Dorsolateral prefrontal cortex (tissue), 120 donors: ENCODE measurements at regions of chr4 and their contacts with region 1.

Region 1: DNA sequence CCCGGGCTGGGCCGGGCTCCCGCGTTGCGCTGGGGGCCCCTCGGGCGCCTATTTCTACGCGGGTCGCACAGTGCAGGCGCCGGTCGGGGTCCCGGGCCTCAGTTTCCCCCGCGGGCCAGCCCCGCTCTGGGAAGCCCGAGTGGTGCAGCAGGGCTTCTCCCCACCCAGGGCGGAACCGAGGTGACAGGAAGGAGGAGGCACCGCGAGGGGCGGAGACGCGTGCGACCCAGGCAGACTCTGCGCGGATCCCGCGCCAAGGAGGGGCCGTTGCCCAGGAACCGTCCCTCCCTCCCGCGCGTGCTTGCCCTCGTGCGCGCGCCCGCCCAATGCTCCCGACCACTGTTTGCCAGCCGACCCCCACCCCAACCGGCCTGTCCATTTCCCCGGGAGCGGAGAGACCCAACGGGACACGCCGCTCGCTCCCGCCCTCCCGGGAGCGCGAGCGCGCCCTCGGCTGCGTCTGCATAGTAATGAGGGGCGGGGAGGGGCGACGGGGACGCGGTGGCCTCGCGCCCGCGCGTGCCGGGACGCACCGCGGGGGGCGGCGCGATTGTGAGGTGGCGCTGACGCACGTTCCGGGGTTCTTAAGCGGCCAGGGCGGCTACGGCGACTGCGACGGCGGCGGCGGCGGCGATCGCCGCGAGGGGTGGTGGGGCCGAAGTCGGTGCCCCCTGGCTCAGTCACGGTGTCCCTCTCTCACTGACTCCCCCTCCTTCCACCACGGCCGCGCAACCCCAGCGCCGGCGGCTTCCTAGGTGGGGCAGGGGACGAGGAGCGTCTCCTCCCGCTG is at the start of gene CPEB2:
- DNase-seq: peak; percentile 90 to 96 (median 94)
- H3K4me3 ChIP-seq: peak within 1 kb of the TSS; percentile 70 to 100 (median 95)
- H3K27ac ChIP-seq: peak within 1 kb of the TSS; percentile 97 to 100 (median 100)
- H3K27me3 ChIP-seq: no peaks in the 10 kb centered on the region
- CTCF ChIP-seq: peak in 15 of 56 donors; percentile 1 to 24 (median 12)
- total RNA-seq, gene CPEB2: 31.4 to 88.1 (median 53.3) TPM

Region 2: DNA sequence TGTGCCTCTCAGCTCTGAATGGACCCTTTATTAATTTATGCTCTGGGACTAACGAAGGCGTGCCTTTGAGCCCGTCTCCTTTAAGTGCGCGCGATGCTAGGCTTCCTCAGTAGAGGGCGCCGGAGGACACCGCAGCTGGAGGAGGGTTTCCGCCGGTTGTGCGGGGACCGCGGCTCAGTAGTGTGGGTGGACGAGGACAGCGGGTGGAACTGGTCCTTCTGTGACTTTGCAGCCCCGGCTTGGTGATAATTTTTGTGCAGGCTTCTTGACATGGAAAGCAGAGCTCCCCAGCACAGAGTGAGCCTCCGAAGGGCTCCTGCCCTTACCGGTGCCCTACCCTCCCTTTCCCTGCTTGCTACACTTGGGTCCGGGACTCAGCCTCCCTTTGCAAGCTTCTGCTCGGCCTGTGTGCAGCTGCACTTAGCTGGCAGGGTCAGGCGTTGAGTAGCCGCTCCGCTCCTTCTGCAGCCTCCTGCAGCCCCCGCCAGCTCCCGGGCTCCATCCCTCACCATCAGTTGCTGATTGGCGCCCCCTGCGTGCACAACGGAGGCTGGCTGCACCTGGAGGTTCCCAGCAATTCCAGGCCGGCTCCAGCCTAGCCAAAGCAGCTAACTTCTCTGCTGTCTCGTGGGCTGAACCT is 1347.8 kb before region 1 on chr4:
- intact Hi-C with region 1: loop called (anchors 5 to 10 kb)
- DNase-seq: peak; percentile 74 to 90 (median 86)
- H3K4me3 ChIP-seq: peak overlapping the region; percentile 40 to 86 (median 68)
- H3K27ac ChIP-seq: peak overlapping the region in 55 of 59 donors; percentile 24 to 96 (median 87)
- H3K27me3 ChIP-seq: no peaks in the 10 kb centered on the region
- CTCF ChIP-seq: peak; percentile 41 to 91 (median 78)

Region 3: GRCh38 chr4:14545163-14545562 is 456.9 kb before region 1 on chr4:
- intact Hi-C with region 1: no loop called
- DNase-seq: no peak
- H3K4me3 ChIP-seq: no peak overlapping the region
- H3K27ac ChIP-seq: no peak overlapping the region
- H3K27me3 ChIP-seq: no peaks in the 10 kb centered on the region
- CTCF ChIP-seq: no peak

Region 4: DNA sequence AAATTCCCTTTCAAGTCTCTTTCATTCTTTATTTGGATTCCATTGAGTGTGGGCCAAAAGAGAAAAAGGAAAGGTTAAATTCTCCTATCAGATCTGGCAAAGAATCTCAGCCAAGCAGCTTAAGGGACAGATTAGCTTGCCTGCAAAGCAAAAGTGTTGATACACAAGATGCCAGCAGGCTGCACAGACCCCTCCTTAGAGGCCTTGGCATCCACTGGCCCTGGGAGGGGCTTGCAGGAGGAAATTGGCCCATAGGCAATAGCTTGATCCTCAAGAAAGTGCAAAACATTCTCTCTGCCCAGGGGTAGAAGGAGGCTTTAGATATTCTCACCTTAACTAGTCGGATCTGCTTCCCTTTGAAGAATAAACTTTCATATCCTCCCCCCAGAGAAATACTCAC is 300.2 kb before region 1 on chr4:
- intact Hi-C with region 1: no loop called
- DNase-seq: no peak
- H3K4me3 ChIP-seq: no peak overlapping the region
- H3K27ac ChIP-seq: no peak overlapping the region
- H3K27me3 ChIP-seq: no peaks in the 10 kb centered on the region
- CTCF ChIP-seq: no peak

Region 5: DNA sequence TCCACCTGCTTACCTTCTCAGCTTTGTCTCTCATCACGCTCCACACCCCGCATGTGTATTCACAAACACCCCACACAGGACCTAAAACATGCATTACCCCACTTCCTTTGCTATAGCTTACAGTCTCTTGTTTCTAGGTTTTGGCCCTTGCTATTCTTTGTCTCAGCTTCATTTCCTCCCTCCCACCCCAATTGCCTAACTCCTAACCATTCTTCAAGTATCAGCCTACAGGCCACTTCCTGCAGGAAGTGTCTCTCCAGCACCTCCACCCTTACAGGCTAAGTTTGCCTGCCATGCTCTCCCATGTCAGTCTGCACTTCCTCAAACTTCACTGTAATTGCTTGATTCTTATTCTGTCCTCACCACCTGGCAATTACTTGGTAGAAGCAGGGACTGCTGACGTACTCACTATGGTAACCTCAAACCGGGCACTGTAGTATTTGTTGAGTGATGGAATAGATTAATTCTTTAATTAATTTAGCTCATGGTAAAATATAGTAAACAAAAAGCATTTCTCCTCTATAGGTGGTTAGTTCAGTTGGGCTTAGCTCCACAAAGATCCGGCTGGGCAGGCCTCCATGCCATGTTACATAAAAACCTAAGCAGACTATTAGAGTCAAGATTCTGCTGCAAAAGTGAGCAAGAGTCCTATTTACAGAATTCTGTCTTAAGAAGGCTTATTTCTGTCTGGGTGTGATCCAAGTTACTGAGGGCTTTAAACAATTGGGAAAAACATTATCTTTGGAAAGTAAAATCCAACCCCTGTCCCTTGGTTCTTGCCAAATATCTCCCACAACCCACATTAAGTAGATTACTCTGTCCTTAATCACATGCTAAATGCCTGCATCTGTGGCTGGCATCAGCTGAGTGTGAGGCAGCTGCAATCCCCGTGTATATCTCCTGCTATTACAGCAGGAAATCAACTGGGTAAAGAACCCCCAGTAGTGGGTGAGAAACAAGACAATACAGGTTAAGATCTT is 124.5 kb before region 1 on chr4:
- intact Hi-C with region 1: loop called (anchors 5 kb)
- DNase-seq: no peak
- H3K4me3 ChIP-seq: no peak overlapping the region
- H3K27ac ChIP-seq: peak overlapping the region in 17 of 59 donors; percentile 3 to 63 (median 36)
- H3K27me3 ChIP-seq: no peaks in the 10 kb centered on the region
- CTCF ChIP-seq: no peak

Region 6: GRCh38 chr4:15149839-15150476 is 147.9 kb after region 1 on chr4:
- intact Hi-C with region 1: loop called (anchors 1 to 5 kb)
- DNase-seq: peak; percentile 74 to 94 (median 90)
- H3K4me3 ChIP-seq: peak overlapping the region in 5 of 59 donors; percentile 4 to 24 (median 15)
- H3K27ac ChIP-seq: peak overlapping the region; percentile 52 to 98 (median 94)
- H3K27me3 ChIP-seq: no peaks in the 10 kb centered on the region
- CTCF ChIP-seq: peak in 32 of 56 donors; percentile 8 to 51 (median 34)

Region 7: DNA sequence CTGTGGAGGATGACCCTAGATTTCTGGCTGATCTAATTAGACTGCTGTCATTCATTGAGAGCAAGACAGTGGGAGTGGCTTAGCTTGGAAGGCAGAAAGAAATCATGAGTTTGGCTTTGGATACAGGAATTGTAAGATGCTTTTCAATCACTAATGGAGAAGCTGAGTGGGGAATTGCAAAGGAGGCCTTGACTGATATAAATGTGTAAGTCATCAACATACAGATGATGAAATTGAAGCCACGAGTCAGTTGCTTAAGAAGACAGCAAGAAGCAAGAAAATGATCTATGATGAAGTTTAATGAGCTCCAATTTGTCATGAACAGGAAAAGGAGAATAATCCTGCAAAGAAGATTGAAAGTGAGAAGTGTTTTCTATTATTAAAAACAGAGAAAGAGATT is 289.1 kb after region 1 on chr4:
- intact Hi-C with region 1: no loop called
- DNase-seq: no peak
- H3K4me3 ChIP-seq: no peak overlapping the region
- H3K27ac ChIP-seq: no peak overlapping the region
- H3K27me3 ChIP-seq: no peaks in the 10 kb centered on the region
- CTCF ChIP-seq: no peak